ENCODE measurements at regions of chr6 and their contacts with region 1.

Region 1: DNA sequence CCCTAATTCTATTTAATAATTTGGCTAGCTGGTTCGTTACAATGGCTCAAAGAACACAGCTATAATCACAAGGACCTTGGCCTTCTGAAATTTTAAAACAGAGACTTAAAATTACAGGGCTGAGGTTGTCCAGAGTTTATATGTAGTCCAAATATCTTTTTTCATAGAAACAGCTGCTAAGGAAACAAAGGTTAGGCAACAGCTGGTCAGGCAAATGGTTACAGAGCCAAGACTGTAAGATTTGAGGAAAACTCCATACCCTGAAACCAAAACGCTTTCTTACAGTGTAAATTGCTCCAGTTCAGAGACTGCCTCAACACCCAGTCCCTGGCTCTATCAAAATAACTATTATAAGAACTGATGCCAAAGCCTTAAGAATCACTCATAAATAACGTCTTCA is 9.7 kb upstream of the ARHGAP18 start:
- DNase-seq: no peak
- ATAC-seq: no peak
- H3K4me3 ChIP-seq: no peak overlapping the region
- H3K4me3 Mint-ChIP-seq: no peak overlapping the region
- H3K27ac ChIP-seq: no peak overlapping the region
- H3K27ac Mint-ChIP-seq: no peak overlapping the region
- H3K4me1 ChIP-seq: peaks cover 0 to 3% of the 10 kb centered on the region in 2 experiments
- H3K4me1 Mint-ChIP-seq: peaks cover 3 to 6% (median 3%) of the 10 kb centered on the region in 3 donors
- H3K27me3 ChIP-seq: no peaks in the 10 kb centered on the region
- H3K27me3 Mint-ChIP-seq: no peaks in the 10 kb centered on the region

Region 2: GRCh38 chr6:129835691-129836090 is 116.0 kb after region 1 on chr6:
- CTCF ChIA-PET with region 1: no interaction called
- POLR2A ChIA-PET with region 1: no interaction called
- DNase-seq: no peak
- ATAC-seq: no peak
- H3K4me3 ChIP-seq: no peak overlapping the region
- H3K4me3 Mint-ChIP-seq: no peak overlapping the region
- H3K27ac ChIP-seq: no peak overlapping the region
- H3K27ac Mint-ChIP-seq: no peak overlapping the region
- H3K4me1 ChIP-seq: no peaks in the 10 kb centered on the region
- H3K4me1 Mint-ChIP-seq: peaks cover 0 to 3% (median 0%) of the 10 kb centered on the region in 3 donors
- H3K27me3 ChIP-seq: no peaks in the 10 kb centered on the region
- H3K27me3 Mint-ChIP-seq: no peaks in the 10 kb centered on the region

Region 3: DNA sequence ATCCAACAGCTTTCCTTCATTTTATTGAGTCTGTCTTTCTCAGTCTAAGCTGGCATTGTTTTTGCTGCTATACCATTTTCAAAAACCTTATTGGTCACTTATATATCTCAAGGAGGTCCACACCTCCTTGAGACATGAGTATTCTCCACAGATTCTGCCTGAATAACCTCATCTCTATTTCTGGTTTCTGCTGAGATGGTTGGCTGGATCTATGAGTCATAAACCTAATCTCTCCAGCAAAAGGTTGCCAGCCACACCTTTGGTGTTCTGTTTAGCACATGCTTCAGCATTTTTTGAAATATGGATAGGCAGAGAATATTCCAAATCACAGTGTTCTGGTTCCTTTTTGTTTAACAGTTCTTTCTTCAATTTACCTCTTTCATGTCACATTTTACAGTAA is 182.2 kb after region 1 on chr6:
- CTCF ChIA-PET with region 1: no interaction called
- POLR2A ChIA-PET with region 1: no interaction called
- DNase-seq: no peak
- ATAC-seq: no peak
- H3K4me3 ChIP-seq: no peak overlapping the region
- H3K4me3 Mint-ChIP-seq: no peak overlapping the region
- H3K27ac ChIP-seq: no peak overlapping the region
- H3K27ac Mint-ChIP-seq: no peak overlapping the region
- H3K4me1 ChIP-seq: no peaks in the 10 kb centered on the region
- H3K4me1 Mint-ChIP-seq: peaks cover 0 to 4% (median 4%) of the 10 kb centered on the region in 3 donors
- H3K27me3 ChIP-seq: no peaks in the 10 kb centered on the region
- H3K27me3 Mint-ChIP-seq: peaks cover 3% of the 10 kb centered on the region in 2 donors

Region 4: DNA sequence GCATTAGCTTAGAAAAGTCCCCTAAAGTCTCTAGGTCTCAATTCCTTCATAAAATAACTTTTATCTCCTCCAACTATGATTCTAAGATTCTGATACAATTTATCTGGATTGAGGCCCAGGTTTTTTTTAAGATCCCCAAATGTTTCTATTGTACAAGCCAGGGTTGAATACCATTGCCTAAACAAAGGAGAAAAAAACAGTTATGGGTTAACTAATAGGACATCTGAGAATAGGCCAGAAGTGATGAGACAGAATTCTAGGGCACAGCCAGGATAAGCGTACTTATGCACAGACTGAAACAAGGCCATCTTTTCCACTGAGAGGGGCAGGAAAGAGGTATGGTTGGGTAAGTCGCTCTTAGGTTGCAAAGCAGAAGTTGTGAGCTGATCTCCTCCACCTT is 1316.9 kb after region 1 on chr6:
- CTCF ChIA-PET with region 1: interaction called in 1 of 2 experiments, 10 read pairs
- POLR2A ChIA-PET with region 1: no interaction called
- DNase-seq: no peak
- ATAC-seq: no peak
- H3K4me3 ChIP-seq: no peak overlapping the region
- H3K4me3 Mint-ChIP-seq: no peak overlapping the region
- H3K27ac ChIP-seq: no peak overlapping the region
- H3K27ac Mint-ChIP-seq: no peak overlapping the region
- H3K4me1 ChIP-seq: no peaks in the 10 kb centered on the region
- H3K4me1 Mint-ChIP-seq: peaks cover 6 to 9% (median 8%) of the 10 kb centered on the region in 3 donors
- H3K27me3 ChIP-seq: no peaks in the 10 kb centered on the region
- H3K27me3 Mint-ChIP-seq: no peaks in the 10 kb centered on the region